Astrocyte of the cerebellum (primary cell): ENCODE measurements at regions of chr11 and their contacts with region 1.

Region 1: DNA sequence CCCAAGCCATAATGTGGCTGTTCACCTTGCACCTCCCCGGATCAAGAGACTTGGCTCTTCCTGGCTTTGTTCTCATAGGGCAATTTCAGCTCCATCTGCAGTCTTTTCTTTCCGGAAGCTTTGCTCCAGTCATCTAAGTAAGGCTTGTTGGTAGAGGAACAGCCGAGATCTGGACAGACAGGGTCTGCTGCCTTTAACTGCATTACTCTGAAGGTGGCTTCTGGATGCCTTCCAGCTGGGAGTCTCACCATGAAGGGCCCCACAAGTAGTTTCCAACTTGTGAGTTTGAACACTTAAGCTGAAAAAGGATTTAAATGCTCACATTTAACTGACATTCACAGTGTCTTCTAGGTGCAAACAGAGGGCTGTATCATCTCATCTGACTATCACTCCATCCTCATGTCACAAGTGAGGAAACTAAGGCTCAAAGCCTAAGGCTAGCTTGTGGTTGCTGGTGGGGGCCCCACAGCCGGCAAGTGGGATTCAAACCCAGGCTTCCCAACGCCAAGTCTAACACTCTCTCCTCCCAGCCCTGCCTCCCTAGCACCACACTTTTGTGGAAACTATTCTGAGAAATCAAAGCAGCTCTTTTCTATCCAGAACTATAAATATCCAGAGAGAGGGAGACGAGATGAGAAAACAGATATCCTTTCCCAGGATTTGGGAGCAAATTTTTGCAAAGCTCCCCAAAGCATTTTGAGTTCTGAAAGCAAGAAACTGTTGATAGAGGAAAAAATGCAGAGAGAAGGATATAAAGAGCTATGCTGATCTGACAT is 58.4 kb downstream of the GALNT18 start:
- DNase-seq: no peak
- H3K4me3 ChIP-seq: no peak overlapping the region
- CTCF ChIP-seq: no peak

Region 2: DNA sequence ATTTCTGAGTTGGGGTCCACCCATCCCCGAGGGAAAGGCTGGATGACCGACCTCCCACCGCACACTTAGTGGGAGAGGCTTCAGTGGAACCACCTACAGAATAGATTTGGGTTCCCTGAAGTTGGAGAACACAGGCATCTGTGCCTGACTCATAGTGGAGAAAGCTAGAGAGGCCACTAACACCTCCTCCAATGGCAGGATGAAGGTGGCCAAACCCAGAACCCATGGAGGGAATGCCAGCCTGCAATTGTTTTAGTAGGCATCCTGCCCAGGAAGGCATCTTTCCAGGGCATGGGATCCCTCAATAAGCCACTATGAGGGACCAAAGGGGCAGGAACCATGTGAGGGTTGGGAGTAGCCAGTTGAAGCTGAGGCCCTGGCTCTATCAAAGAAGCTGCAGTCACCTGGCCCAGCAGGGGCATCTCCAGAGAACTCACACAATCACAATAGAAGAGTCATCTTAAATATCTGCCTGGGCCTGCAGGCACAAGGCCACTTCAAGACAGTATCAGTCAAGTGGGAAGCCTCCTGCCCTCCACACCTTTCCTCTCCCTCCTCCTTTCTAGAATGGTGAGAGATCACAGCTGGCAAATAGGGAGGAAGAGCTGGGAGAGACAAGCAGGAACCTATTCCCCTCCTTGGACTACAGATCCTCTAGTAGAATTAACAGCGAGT is 86.3 kb before region 1 on chr11:
- in situ Hi-C with region 1: loop called (anchors 5 kb)
- DNase-seq: no peak
- H3K4me3 ChIP-seq: no peak overlapping the region
- CTCF ChIP-seq: no peak

Region 3: GRCh38 chr11:11493698-11494097 is 69.7 kb before region 1 on chr11:
- in situ Hi-C with region 1: no loop called
- DNase-seq: no peak
- H3K4me3 ChIP-seq: no peak overlapping the region
- CTCF ChIP-seq: no peak

Region 4: GRCh38 chr11:11626128-11626527 is 62.7 kb after region 1 on chr11:
- in situ Hi-C with region 1: loop called (anchors 5 kb)
- DNase-seq: no peak
- H3K4me3 ChIP-seq: no peak overlapping the region
- CTCF ChIP-seq: no peak